ENCODE measurements at regions of chr12 and their contacts with region 1.

Region 1: DNA sequence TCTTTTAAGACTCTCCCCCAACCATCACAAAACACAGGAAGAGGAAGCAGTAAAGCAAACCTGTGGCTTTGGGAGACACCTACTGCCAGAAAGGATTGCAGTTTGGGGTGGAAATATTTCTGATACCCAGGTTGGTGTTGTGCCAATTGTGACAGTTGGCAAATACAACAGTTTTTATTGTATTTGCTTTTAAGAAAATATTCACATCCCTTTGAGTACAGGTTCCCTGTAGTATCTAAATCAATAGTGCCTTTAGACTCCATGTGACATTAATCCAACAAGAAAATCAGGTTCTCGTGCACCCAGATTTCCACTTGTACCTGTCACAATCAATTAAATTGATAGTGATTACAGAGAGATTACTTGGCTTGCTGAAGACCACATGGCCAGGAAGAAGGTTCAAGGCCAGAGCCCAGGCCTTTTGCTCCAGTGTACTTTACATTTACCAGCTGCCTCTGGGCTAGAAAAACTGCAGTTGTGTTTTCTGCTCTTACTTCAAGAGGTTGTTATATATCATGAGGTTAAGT is 361.2 kb downstream of the ATP23 start:
- DNase-seq: peak in 1 of 2 donors; percentile 4
- ATAC-seq: no peak
- H3K4me3 ChIP-seq: no peak overlapping the region
- H3K27ac ChIP-seq: no peak overlapping the region
- H3K4me1 ChIP-seq: peaks cover 0 to 11% (median 0%) of the 10 kb centered on the region in 9 donors
- H3K27me3 ChIP-seq: no peaks in the 10 kb centered on the region
- CTCF ChIP-seq: peak in 5 of 9 donors; percentile 15 to 53 (median 44)

Region 2: DNA sequence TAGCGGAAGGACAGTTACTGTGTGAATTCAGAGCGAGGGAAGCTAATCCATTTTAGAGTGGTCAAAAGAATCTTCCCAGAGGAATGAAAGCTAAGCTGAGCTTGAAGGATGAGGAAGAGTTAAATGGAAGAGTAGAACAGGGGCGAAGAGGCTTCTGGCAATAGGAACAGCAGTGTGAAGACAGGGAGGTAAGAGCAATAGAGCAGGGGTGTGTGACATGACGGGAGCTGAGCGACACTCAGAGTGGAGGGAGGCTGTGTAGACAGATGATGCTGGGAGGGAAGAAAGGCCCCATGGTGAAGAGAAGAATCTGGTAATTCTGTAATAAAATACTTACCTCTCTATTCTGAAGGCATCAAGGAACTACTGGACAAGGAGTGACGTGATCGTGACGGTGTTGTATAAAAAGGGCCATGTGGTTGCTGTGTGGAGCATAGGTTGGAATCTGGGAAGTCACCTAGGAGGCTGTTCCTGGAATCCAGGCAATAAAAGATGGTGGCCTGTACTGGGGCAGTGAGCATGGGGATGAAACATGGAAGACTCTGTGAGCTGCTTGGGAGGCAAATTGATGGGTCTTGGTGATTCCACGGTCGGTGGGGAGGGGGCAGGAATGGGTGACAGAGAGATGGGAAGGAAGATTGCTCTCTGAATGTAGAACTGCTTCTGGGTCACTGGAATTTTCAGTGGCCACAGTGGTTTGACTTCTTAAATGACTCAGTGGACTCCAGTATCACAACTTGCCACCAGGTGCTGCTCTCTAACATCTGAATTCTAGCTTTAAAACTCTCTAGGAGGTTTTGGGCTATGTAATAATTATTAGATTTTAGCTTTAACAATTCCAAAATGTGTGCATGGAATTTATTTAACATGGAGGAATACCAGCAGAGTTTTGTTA is 197.1 kb before region 1 on chr12:
- intact Hi-C with region 1: loop called in 1 of 10 experiments (anchors 10 kb)
- DNase-seq: no peak
- ATAC-seq: peak; percentile 25 to 73 (median 56)
- H3K4me3 ChIP-seq: no peak overlapping the region
- H3K27ac ChIP-seq: peak overlapping the region in 9 of 10 donors; percentile 14 to 86 (median 56)
- H3K4me1 ChIP-seq: peaks cover 0 to 9% (median 2%) of the 10 kb centered on the region in 9 donors
- H3K27me3 ChIP-seq: no peaks in the 10 kb centered on the region
- CTCF ChIP-seq: peak in 7 of 9 donors; percentile 18 to 55 (median 36)

Region 3: DNA sequence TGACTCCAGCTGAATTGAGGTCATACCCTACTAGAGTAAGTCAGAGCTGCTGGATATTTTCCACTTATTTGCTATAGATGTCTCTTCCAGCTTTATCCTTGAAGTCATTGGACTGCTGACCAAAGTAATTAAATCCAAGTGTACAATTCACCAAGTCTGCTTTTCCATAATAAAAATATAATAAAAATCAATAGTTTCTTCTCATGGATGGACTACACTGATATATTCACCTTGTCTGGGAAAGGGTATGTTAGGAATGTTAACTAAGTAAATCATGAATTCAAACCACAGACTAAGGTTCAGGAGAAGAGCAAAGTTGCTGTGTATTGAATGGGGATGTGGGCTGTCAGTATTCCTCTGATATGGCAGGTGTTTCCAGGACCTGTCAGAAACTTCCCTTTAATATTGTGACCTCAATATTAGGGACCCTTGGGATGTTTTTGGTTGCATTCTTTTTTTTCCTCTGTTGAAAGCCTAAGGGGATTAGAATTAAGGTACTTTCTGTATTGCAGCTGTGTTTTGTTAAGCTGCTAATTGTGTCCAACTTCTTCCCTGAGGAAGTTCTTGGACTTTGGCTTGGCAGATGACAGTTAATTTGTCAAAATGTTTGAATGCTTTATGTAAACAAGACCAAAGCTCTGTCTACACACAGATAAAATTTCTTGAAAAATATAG is 77.2 kb before region 1 on chr12:
- intact Hi-C with region 1: no loop called
- DNase-seq: no peak
- ATAC-seq: peak in 1 of 8 donors; percentile 41
- H3K4me3 ChIP-seq: no peak overlapping the region
- H3K27ac ChIP-seq: peak overlapping the region in 2 of 10 donors; percentile 5 to 48
- H3K4me1 ChIP-seq: peaks cover 0 to 24% (median 5%) of the 10 kb centered on the region in 9 donors
- H3K27me3 ChIP-seq: no peaks in the 10 kb centered on the region
- CTCF ChIP-seq: no peak

Measured in heart right ventricle (tissue), 16 donors.